Upper lobe of right lung (tissue), 1 donor: ENCODE measurements at regions of chr2 and their contacts with region 1.

Region 1: GRCh38 chr2:136171221-136171620 is 53.3 kb upstream of the CXCR4 start:
- DNase-seq: no peak
- ATAC-seq: peak; percentile 15
- H3K4me3 ChIP-seq: no peak overlapping the region
- H3K27ac ChIP-seq: no peak overlapping the region
- H3K4me1 ChIP-seq: no peaks in the 10 kb centered on the region
- H3K27me3 ChIP-seq: no peaks in the 10 kb centered on the region
- CTCF ChIP-seq: no peak

Region 2: GRCh38 chr2:136225950-136226835 is 55.0 kb after region 1 on chr2:
- intact Hi-C with region 1: no loop called
- DNase-seq: no peak
- ATAC-seq: peak; percentile 62
- H3K4me3 ChIP-seq: no peak overlapping the region
- H3K27ac ChIP-seq: no peak overlapping the region
- H3K4me1 ChIP-seq: no peaks in the 10 kb centered on the region
- H3K27me3 ChIP-seq: no peaks in the 10 kb centered on the region
- CTCF ChIP-seq: no peak

Region 3: GRCh38 chr2:136297994-136298393 is 126.8 kb after region 1 on chr2:
- intact Hi-C with region 1: loop called (anchors 10 kb)
- DNase-seq: no peak
- ATAC-seq: no peak
- H3K4me3 ChIP-seq: no peak overlapping the region
- H3K27ac ChIP-seq: no peak overlapping the region
- H3K4me1 ChIP-seq: no peaks in the 10 kb centered on the region
- H3K27me3 ChIP-seq: no peaks in the 10 kb centered on the region
- CTCF ChIP-seq: no peak